Ascending aorta (tissue), 2 donors: ENCODE measurements at regions of chr20 and their contacts with region 1.

Region 1: DNA sequence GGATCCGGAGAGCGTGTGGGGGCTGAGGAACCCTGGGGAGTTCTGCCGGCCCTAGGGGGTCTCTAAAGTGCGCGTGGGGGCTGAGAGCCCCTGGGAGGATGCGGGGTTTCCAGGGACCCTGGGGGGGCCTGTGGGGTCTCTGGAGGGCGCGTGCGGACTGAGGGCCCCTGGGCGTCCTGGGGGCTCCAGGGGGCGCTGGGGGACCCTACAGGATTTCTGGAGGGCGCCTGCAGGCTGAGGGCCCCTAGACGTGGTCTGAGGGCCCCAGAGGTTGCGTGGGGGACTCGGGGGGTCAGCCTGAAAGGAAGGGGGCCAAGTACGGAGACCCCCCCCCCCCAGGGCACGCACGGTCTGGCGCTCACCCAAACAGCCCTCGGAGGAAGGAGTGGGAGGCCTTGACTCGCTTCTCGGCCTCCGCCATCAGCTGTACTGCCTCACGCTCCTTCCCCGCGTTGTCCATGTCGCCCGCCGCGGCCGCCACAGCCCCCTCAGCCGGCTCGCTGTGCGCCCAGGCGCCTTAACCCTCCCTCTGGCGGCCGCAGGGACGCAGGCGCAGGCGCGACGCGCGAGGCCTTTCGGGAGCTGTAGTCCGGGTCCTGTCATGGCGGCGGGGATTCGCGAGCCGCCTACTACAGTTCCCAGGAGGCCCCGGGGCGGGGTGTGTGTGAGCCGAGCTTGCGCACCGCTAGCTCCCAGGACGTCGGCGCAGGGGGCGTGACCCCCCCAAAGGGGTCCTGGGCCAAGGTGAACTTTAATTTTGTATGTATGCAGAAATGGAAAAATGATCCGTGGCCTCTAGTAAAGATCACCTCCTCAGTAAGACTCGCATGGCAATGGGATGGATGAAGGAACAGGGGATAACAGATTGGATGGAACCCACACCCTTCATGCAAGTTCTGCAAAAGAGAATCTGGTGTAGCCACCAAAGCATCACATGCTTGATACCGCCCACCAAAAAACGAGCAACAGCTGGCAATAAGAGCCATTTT is at the start of gene NAPB:
- DNase-seq: peak; percentile 76 to 96
- H3K4me3 ChIP-seq: peak within 1 kb of the TSS; percentile 70 to 99
- H3K27ac ChIP-seq: peak within 1 kb of the TSS; percentile 87 to 91
- H3K4me1 ChIP-seq: peaks cover 0 to 6% of the 10 kb centered on the region in 2 donors
- H3K27me3 ChIP-seq: no peaks in the 10 kb centered on the region
- CTCF ChIP-seq: peak; percentile 40 to 84 (median 44)
- total RNA-seq, gene NAPB: 0.75 TPM

Region 2: GRCh38 chr20:23622839-23623343 is 201.7 kb after region 1 on chr20:
- intact Hi-C with region 1: loop called (anchors 5 kb)
- DNase-seq: peak; percentile 50 to 88
- H3K4me3 ChIP-seq: peak overlapping the region; percentile 34 to 55
- H3K27ac ChIP-seq: peak overlapping the region; percentile 88 to 91
- H3K4me1 ChIP-seq: peaks cover 0 to 17% of the 10 kb centered on the region in 2 donors
- H3K27me3 ChIP-seq: no peaks in the 10 kb centered on the region
- CTCF ChIP-seq: no peak